PC-9 (cell line): ENCODE measurements at regions of chr6 and their contacts with region 1.

Region 1: GRCh38 chr6:158149641-158150040 is 18.4 kb downstream of the SERAC1 start:
- DNase-seq: no peak
- H3K4me3 ChIP-seq: no peak overlapping the region
- H3K27ac ChIP-seq: no peak overlapping the region
- H3K4me1 ChIP-seq: no peaks in the 10 kb centered on the region
- H3K27me3 ChIP-seq: no peaks in the 10 kb centered on the region
- CTCF ChIP-seq: no peak

Region 2: DNA sequence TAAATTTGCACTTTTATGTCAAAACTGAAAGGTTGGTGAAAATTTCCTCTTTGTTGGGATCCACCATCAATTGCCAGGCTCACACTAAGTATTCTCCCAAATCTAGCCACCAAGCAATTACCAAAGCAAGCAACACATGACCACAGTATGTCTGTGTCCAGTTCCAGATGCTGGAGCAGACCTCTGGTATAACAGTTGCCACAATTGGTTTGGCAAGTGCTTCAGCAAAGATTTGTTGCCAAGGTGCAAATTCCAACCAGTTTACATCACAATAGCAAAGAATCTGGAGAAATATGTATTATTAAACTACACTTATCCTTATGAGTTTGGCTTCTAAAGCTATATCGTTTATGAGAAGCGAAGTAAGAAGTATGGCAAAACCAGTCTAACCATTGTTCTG is 24.9 kb after region 1 on chr6:
- CTCF ChIA-PET with region 1: no interaction called
- POLR2A ChIA-PET with region 1: no interaction called
- intact Hi-C with region 1: no loop called
- DNase-seq: no peak
- H3K4me3 ChIP-seq: no peak overlapping the region
- H3K27ac ChIP-seq: no peak overlapping the region
- H3K4me1 ChIP-seq: peaks cover 20% of the 10 kb centered on the region
- H3K27me3 ChIP-seq: no peaks in the 10 kb centered on the region
- CTCF ChIP-seq: no peak

Region 3: DNA sequence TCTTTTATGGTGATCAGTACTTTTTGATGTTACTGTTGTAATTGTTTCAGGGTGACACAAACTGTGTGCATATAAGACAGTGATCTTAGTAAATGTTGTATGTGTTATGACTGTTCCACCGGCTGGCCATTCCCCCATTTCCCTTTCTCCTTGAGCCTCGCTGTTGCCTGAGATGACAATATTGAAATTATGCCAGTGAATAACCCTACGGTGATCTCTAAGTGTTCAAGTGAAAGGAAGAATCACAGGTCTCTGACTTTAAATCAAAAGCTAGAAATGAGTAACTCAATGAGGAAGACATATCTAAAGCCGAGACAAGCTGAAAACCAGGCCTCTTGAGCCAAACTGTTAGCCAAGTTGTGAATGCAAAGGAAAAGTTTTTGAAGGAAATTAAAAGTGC is 194.9 kb after region 1 on chr6:
- CTCF ChIA-PET with region 1: no interaction called
- POLR2A ChIA-PET with region 1: no interaction called
- intact Hi-C with region 1: no loop called
- DNase-seq: no peak
- H3K4me3 ChIP-seq: no peak overlapping the region
- H3K27ac ChIP-seq: no peak overlapping the region
- H3K4me1 ChIP-seq: no peaks in the 10 kb centered on the region
- H3K27me3 ChIP-seq: no peaks in the 10 kb centered on the region
- CTCF ChIP-seq: no peak

Region 4: DNA sequence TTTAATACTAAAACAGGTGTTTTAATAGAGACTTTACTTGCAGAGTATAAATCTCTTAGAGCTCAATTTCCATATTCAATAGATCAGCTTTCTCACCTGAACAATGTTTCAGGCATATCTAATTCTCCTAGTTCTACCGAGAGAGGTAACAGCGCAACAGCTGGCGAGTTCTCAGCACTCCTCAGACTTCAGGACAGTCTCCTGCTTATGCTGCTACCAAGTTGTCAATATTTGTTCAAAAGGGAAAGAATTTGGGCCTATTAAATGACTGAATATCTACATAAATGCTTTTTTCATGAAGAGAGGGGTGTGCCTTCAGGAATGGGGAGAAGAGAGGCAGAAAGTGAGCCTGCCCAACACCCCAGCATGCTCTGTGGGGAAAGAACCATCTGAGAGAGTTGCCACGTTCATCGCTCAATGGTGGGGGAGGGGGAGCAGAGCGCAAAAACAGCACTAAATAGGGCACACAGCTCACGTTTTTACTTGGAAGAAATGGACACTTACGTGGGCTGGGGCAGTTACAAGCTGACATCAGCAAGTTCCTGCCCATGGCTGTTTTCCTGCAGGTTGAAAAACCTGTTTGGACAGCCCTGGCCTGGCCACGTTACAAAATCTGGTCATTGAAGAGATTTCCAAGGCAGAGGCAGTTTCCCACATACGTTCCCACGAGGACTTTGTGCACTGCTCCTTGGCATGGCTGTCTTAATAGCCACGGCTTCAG is 631.5 kb after region 1 on chr6:
- CTCF ChIA-PET with region 1: no interaction called
- POLR2A ChIA-PET with region 1: interaction called, 10 read pairs
- intact Hi-C with region 1: no loop called
- DNase-seq: peak; percentile 65 to 89
- H3K4me3 ChIP-seq: no peak overlapping the region; the same call in 1 of the 2 replicates
- H3K27ac ChIP-seq: peak overlapping the region; percentile 81
- H3K4me1 ChIP-seq: peaks cover 100% of the 10 kb centered on the region
- H3K27me3 ChIP-seq: no peaks in the 10 kb centered on the region
- CTCF ChIP-seq: no peak